AG04449 (cell line): ENCODE measurements at regions of chr20 and their contacts with region 1.

Region 1: DNA sequence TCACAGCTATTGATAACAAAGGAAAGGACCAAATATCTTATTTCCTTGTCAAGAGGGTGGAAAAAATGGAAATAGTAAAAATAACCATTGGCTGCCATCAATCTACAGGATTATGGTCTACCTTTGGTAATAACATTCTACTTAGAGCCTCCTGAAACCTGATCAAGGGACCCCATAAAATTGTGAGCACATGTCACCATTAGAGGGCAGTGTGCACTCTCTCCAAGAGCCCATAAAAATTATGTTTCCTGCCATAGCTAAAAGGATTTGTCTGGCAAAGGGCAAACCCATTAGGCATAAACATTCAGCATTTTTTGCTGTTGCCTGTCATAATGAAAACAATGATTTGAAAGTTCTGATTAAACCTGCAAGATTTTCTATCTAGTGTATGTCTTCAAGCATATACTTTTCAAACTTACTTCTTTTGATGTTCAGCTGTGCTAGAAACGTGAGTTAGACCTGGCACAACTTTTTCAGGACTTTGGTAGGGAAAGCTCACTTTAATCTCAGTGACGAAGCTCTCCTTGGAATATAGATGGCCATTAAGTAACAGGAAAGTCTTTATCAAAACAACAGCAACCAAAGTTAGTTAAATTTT is 120.7 kb upstream of the ZFP64 start:
- DNase-seq: peak; percentile 7
- H3K4me3 ChIP-seq: no peak overlapping the region
- CTCF ChIP-seq: peak; percentile 52

Region 2: DNA sequence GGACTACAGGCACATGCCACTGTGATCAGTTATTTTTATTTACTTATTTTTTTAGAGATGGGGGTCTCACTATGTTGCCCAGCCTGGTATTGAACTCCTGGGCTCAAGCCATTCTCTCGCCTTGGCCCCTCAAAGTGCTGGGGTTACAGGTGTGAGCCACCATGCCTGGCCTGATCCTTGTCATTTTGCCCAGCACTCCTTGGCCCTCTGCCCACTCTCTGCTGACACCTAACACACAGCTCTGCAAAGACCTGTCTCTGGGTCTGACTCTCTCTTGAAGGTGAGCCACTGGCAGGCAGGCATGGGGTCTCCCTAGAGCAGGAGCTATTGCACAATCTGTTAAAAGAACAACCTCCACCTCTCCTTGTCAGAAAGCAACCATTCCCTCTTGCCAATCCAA is 276.3 kb before region 1 on chr20:
- CTCF ChIA-PET with region 1: no interaction called
- POLR2A ChIA-PET with region 1: no interaction called
- DNase-seq: no peak
- H3K4me3 ChIP-seq: no peak overlapping the region
- CTCF ChIP-seq: no peak

Region 3: DNA sequence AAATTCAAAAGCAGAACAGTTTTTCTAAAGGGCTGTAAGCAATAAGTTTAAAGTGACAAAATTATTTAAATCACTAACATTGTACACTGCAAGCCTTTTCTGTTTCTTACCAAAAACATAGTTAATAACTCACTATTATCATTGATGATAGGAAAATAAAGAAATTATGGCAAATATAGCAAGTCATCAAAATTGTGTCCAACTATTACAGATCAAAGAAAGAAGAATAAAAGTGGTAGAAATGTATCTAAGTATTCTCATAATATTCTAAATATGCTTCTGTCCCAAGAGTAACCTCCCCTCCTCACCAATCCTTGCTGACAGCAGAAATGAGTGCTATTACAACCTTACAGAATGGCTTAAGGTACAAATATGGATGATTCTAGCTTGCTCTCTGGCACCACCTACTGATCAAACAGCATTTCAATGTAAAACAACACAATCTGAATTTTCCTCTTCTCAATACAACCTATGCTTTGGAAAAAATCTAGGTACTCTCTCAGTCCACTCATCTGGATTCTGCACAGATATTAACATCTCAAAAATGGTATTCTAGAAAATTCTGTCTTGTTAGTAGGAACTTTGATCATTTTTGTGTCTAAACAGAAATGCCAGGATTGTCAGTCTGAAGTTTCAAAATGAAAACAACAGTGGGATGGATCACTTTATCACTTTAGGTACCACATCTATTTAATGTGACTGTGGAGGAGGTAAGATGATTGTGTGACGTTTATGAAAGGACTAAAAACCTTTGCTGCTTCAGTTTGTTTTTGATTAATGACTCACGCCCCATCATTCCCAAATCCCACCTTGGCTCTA is 161.6 kb before region 1 on chr20:
- CTCF ChIA-PET with region 1: no interaction called
- POLR2A ChIA-PET with region 1: no interaction called
- DNase-seq: no peak
- H3K4me3 ChIP-seq: no peak overlapping the region
- CTCF ChIP-seq: peak; percentile 75

Region 4: GRCh38 chr20:52295556-52295955 is 16.7 kb before region 1 on chr20:
- CTCF ChIA-PET with region 1: interaction called, 50 read pairs
- POLR2A ChIA-PET with region 1: no interaction called
- DNase-seq: no peak
- H3K4me3 ChIP-seq: no peak overlapping the region
- CTCF ChIP-seq: no peak

Region 5: GRCh38 chr20:52379723-52380336 is 67.6 kb after region 1 on chr20:
- CTCF ChIA-PET with region 1: interaction called, 18 read pairs
- POLR2A ChIA-PET with region 1: no interaction called
- DNase-seq: no peak
- H3K4me3 ChIP-seq: no peak overlapping the region
- CTCF ChIP-seq: peak; percentile 85

Region 6: GRCh38 chr20:53216856-53217576 is 904.8 kb after region 1 on chr20:
- CTCF ChIA-PET with region 1: interaction called, 91 read pairs
- POLR2A ChIA-PET with region 1: no interaction called
- DNase-seq: no peak
- H3K4me3 ChIP-seq: no peak overlapping the region
- CTCF ChIP-seq: peak; percentile 89

Region 7: GRCh38 chr20:53547664-53548239 is 1235.5 kb after region 1 on chr20:
- CTCF ChIA-PET with region 1: interaction called, 35 read pairs
- POLR2A ChIA-PET with region 1: no interaction called
- DNase-seq: peak; percentile 29
- H3K4me3 ChIP-seq: no peak overlapping the region
- CTCF ChIP-seq: peak; percentile 63